Activated CD4-positive, alpha-beta T cell treated with anti-CD3 and anti-CD28 coated beads for 36 hours (primary cell): ENCODE measurements at regions of chr17 and their contacts with region 1.

Region 1: DNA sequence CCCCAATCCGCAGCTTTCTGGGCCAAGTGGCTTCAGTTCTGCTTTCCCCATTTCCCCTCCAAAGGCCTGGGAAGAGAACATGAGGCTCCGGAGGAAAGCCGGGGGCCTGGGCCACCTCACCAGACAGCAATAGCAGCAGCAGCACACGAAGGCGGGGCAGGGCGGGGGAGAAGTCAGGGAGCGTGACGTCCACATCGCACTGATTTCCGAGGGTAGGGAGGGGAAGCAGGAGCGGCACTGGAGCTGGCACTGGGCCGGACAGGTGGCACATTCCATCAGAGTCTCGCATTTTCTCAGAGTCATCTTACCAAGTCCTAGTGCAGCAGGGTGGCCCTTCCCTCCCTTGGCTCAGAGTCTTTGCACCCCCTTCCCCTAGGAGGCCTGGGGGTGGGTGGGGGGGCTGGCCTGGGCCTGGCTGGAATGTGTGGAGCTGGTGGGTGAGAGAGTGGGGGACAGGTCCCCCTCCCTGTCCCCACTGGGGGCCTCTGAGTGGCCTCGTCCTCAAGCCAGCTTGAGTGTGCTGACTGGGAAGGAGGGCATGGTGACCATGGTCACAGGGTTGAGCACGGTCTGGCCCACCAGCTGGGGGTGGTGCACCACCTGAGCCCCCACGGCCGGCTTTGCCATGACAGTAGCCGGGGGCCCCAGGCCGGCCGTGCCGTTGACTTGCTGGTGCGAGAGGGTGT is 14.3 kb downstream of the MNT start:
- DNase-seq: no peak
- ATAC-seq: no peak
- H3K4me3 Mint-ChIP-seq: no peak overlapping the region
- H3K27ac Mint-ChIP-seq: no peak overlapping the region
- H3K4me1 Mint-ChIP-seq: peaks cover 30% of the 10 kb centered on the region
- H3K27me3 Mint-ChIP-seq: no peaks in the 10 kb centered on the region

Region 2: GRCh38 chr17:2266045-2266864 is 120.3 kb before region 1 on chr17:
- CTCF ChIA-PET with region 1: no interaction called
- POLR2A ChIA-PET with region 1: no interaction called
- intact Hi-C with region 1: no loop called
- DNase-seq: peak; percentile 93
- ATAC-seq: peak; percentile 76
- H3K4me3 Mint-ChIP-seq: peak overlapping the region; percentile 72
- H3K27ac Mint-ChIP-seq: peak overlapping the region; percentile 98
- H3K4me1 Mint-ChIP-seq: peaks cover 86% of the 10 kb centered on the region
- H3K27me3 Mint-ChIP-seq: no peaks in the 10 kb centered on the region

Region 3: DNA sequence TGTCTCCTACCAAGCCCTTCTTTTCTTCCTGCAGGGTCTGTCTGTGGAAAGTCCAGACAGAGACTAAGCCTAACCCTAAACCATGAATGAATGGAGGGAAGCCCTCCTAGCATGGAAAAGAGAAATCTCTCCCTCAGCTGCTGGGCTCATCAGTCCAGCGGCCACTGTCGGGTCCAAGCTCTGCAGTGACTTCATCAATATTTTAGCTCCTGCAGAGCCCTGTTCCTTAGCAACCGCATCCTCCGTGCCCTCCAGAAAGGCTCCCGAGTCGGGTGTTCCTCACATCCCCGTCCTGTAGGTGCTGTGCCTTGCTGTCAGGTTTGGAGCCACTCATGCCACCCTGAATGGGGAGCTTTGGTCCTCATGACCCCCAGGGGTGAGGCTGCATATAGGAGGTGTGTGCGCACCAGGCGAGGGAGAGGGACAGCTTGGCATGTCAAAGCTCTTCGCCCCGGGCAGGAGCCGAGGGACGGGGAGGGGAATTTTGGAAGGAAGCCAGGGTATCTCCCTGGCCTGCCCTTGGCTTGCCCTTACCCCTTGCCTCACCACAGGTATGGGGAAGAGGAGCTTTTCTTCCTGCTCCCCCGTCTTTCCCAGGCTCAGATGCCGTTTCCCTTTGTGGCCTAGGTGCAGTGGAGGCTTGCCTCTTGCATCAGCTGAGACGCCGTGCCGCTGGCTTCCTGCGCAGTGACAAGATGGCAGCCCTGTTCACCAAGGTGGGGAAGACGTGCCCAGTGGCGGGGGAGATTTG is 25.4 kb before region 1 on chr17:
- CTCF ChIA-PET with region 1: interaction called, 12 read pairs
- POLR2A ChIA-PET with region 1: no interaction called
- intact Hi-C with region 1: no loop called
- DNase-seq: no peak
- ATAC-seq: no peak
- H3K4me3 Mint-ChIP-seq: no peak overlapping the region
- H3K27ac Mint-ChIP-seq: no peak overlapping the region
- H3K4me1 Mint-ChIP-seq: no peaks in the 10 kb centered on the region
- H3K27me3 Mint-ChIP-seq: no peaks in the 10 kb centered on the region

Region 4: GRCh38 chr17:2406903-2407790 is 20.6 kb after region 1 on chr17:
- CTCF ChIA-PET with region 1: interaction called, 389 read pairs
- POLR2A ChIA-PET with region 1: interaction called, 36 read pairs
- intact Hi-C with region 1: no loop called
- DNase-seq: peak; percentile 63
- ATAC-seq: peak; percentile 76
- H3K4me3 Mint-ChIP-seq: no peak overlapping the region
- H3K27ac Mint-ChIP-seq: peak overlapping the region; percentile 80
- H3K4me1 Mint-ChIP-seq: peaks cover 27% of the 10 kb centered on the region
- H3K27me3 Mint-ChIP-seq: no peaks in the 10 kb centered on the region

Region 5: GRCh38 chr17:2416010-2416734 is 29.6 kb after region 1 on chr17:
- CTCF ChIA-PET with region 1: interaction called, 389 read pairs
- POLR2A ChIA-PET with region 1: interaction called, 22 read pairs
- intact Hi-C with region 1: loop called (anchors 1 kb)
- DNase-seq: peak; percentile 90
- ATAC-seq: peak; percentile 82
- H3K4me3 Mint-ChIP-seq: no peak overlapping the region
- H3K27ac Mint-ChIP-seq: no peak overlapping the region
- H3K4me1 Mint-ChIP-seq: peaks cover 4% of the 10 kb centered on the region
- H3K27me3 Mint-ChIP-seq: no peaks in the 10 kb centered on the region

Region 6: DNA sequence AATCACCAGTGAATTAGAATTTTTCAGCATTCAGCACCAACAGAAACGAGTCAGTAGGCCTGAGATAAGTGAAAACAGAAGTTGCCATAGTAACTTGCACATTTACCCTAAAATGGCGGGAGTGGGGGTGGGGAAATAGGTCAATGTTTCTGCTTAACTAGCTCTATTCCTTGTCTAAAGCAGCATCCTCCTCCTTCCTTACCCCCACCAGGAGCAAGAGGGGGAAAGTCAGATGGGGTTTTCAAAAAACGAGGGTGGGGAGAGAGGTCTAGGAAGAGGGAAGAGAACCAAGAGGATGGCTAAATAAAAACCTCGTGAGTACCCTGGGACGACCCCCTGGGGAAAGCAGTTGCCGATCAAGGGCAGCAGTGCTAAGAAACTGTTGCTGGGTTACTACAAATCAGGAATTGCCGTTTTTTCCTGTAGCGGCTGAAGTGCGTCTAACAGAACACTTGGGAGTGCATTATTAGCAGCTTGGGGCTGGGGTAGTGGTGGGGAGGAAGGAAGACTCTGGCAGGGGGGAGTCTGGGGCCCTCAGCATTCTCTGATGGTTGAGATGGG is 48.7 kb after region 1 on chr17:
- CTCF ChIA-PET with region 1: interaction called, 10 read pairs
- POLR2A ChIA-PET with region 1: no interaction called
- intact Hi-C with region 1: no loop called
- DNase-seq: no peak
- ATAC-seq: no peak
- H3K4me3 Mint-ChIP-seq: no peak overlapping the region
- H3K27ac Mint-ChIP-seq: no peak overlapping the region
- H3K4me1 Mint-ChIP-seq: peaks cover 8% of the 10 kb centered on the region
- H3K27me3 Mint-ChIP-seq: no peaks in the 10 kb centered on the region

Region 7: GRCh38 chr17:2591040-2591640 is 204.6 kb after region 1 on chr17:
- CTCF ChIA-PET with region 1: no interaction called
- POLR2A ChIA-PET with region 1: no interaction called
- intact Hi-C with region 1: no loop called
- DNase-seq: no peak
- ATAC-seq: no peak
- H3K4me3 Mint-ChIP-seq: no peak overlapping the region
- H3K27ac Mint-ChIP-seq: no peak overlapping the region
- H3K4me1 Mint-ChIP-seq: peaks cover 11% of the 10 kb centered on the region
- H3K27me3 Mint-ChIP-seq: no peaks in the 10 kb centered on the region

Region 8: GRCh38 chr17:2672026-2672425 is 285.5 kb after region 1 on chr17:
- CTCF ChIA-PET with region 1: interaction called, 5 read pairs
- POLR2A ChIA-PET with region 1: no interaction called
- intact Hi-C with region 1: loop called in 1 of 2 experiments (anchors 1 kb)
- DNase-seq: no peak
- ATAC-seq: no peak
- H3K4me3 Mint-ChIP-seq: no peak overlapping the region
- H3K27ac Mint-ChIP-seq: no peak overlapping the region
- H3K4me1 Mint-ChIP-seq: peaks cover 6% of the 10 kb centered on the region
- H3K27me3 Mint-ChIP-seq: no peaks in the 10 kb centered on the region

Region 9: GRCh38 chr17:2837147-2837561 is 450.6 kb after region 1 on chr17:
- CTCF ChIA-PET with region 1: no interaction called
- POLR2A ChIA-PET with region 1: no interaction called
- intact Hi-C with region 1: loop called in 1 of 2 experiments (anchors 1 kb)
- DNase-seq: peak; percentile 79
- ATAC-seq: peak; percentile 100
- H3K4me3 Mint-ChIP-seq: no peak overlapping the region
- H3K27ac Mint-ChIP-seq: no peak overlapping the region
- H3K4me1 Mint-ChIP-seq: peaks cover 8% of the 10 kb centered on the region
- H3K27me3 Mint-ChIP-seq: no peaks in the 10 kb centered on the region